HEK293T (cell line): ENCODE measurements at regions of chr5 and their contacts with region 1.

Region 1: GRCh38 chr5:51382763-51383490 is at the start of gene ISL1:
- DNase-seq: peak; percentile 76

Region 2: GRCh38 chr5:51398875-51399642 is 16.1 kb after region 1 on chr5:
- CTCF ChIA-PET with region 1: no interaction called
- POLR2A ChIA-PET with region 1: interaction called, 14 read pairs
- DNase-seq: no peak